ENCODE measurements at regions of chr17 and their contacts with region 1.

Region 1: DNA sequence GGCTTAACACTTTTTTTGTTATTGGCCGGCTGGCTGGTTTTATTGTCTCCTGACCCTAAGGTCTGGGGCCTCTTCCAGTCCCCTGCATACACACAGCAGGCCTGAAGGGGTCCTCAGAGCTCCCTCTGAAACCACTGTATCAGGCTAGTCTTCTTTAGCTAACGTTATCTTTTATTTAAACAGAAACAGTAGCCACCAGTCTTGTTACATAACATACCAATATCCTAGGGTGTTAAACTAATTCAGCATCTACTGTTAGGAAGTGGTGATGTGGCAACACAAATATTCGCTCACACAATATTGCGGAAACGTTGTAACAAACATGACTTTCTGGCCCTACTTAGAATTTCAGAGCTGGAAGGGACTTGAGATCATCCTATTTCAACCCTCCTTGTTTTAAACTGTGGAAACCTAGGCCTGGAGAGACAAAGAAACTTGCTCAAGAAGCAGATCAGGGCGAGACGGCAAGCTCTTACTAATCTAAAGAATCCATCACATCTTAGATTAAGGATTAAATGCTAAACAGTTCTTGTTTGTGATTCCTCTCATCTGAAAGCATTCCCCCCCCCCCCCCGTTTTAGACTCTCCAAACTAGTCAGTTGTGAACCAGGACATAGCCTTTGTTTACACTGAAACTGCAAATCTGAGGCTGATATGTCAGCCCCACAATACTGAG is 1.7 kb upstream of the YPEL2 start:
- DNase-seq: peak; percentile 70

Region 2: GRCh38 chr17:59440784-59441441 is 111.1 kb after region 1 on chr17:
- CTCF ChIA-PET with region 1: interaction called, 26 read pairs
- POLR2A ChIA-PET with region 1: no interaction called
- DNase-seq: peak; percentile 87

Measured in HEK293T (cell line).